ENCODE measurements at regions of chr10 and their contacts with region 1.

Region 1: GRCh38 chr10:61750929-61751471 is 88.3 kb downstream of the CABCOCO1 start:
- DNase-seq: peak; percentile 53
- ATAC-seq: peak; percentile 65 to 91 (median 73)
- H3K4me3 ChIP-seq: no peak overlapping the region
- H3K27ac ChIP-seq: no peak overlapping the region
- H3K4me1 ChIP-seq: peaks cover 0 to 18% (median 0%) of the 10 kb centered on the region in 9 donors
- H3K27me3 ChIP-seq: no peaks in the 10 kb centered on the region
- CTCF ChIP-seq: peak; percentile 26 to 78 (median 67)

Region 2: DNA sequence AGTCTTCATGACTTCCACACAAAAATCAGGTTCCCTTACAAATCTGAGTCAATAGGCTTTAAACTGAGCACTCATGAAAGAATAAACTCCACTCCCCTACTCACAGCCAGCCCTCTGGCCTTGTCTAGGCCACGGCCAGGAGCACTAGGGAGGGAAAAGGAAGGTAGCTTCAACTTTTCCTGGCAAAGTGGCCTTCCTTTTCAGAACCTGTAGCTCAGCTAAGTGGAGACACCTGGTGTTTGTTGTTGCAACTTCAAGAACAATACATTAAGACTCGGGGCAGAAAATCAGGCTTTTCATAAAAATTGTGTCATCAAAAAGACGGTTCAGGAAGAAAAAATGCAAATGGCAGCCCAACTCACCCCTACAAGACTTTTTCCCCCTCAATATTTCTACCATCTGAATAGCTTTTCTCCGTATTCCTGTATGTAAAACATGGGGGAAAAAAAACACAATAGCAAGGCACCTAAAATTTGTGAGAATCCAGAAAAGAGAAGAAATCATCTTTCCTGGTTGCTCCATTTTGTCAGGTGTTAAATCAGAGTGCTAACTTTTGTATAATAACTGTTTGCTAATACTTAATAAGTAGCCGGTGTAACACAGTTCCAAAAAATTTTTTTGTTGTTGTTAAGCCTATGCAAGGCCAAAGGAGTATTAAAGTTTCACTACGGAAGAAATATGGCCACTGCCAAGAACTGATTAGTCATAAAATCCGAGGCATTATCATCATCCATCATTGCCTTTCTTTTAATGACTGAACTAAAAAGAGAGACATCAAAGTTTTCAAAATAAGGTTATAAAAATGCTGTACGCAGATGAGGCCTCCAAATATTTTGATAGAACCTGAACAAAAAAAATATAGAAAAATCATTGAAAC is 84.3 kb after region 1 on chr10:
- intact Hi-C with region 1: loop called in 1 of 10 experiments (anchors 5 kb)
- DNase-seq: peak in 1 of 2 donors; percentile 6
- ATAC-seq: peak in 6 of 8 donors; percentile 21 to 48 (median 46)
- H3K4me3 ChIP-seq: no peak overlapping the region
- H3K27ac ChIP-seq: peak overlapping the region in 4 of 10 donors; percentile 10 to 55 (median 24)
- H3K4me1 ChIP-seq: peaks cover 0 to 33% (median 5%) of the 10 kb centered on the region in 9 donors
- H3K27me3 ChIP-seq: no peaks in the 10 kb centered on the region
- CTCF ChIP-seq: peak in 6 of 9 donors; percentile 28 to 55 (median 41)

Region 3: GRCh38 chr10:61869774-61870525 is 119.0 kb after region 1 on chr10:
- intact Hi-C with region 1: loop called in 3 of 10 experiments (anchors 2 to 10 kb)
- DNase-seq: no peak
- ATAC-seq: no peak
- H3K4me3 ChIP-seq: peak overlapping the region in 2 of 10 donors; percentile 6 to 12
- H3K27ac ChIP-seq: peak overlapping the region in 1 of 10 donors; percentile 3
- H3K4me1 ChIP-seq: peaks cover 0 to 20% (median 7%) of the 10 kb centered on the region in 9 donors
- H3K27me3 ChIP-seq: peaks cover 0 to 3% (median 0%) of the 10 kb centered on the region in 7 donors
- CTCF ChIP-seq: no peak

Region 4: GRCh38 chr10:62244780-62245467 is 493.9 kb after region 1 on chr10:
- intact Hi-C with region 1: loop called in 4 of 10 experiments (anchors 5 to 10 kb)
- DNase-seq: peak in 1 of 2 donors; percentile 70
- ATAC-seq: peak; percentile 41 to 90 (median 84)
- H3K4me3 ChIP-seq: peak overlapping the region in 2 of 10 donors; percentile 12 to 41
- H3K27ac ChIP-seq: peak overlapping the region in 1 of 10 donors; percentile 78
- H3K4me1 ChIP-seq: peaks cover 0 to 32% (median 3%) of the 10 kb centered on the region in 9 donors
- H3K27me3 ChIP-seq: no peaks in the 10 kb centered on the region
- CTCF ChIP-seq: peak; percentile 70 to 95 (median 91)